ENCODE measurements at regions of chr19 and their contacts with region 1.

Region 1: GRCh38 chr19:48469289-48469881 is at the start of gene CYTH2:
- DNase-seq: peak; percentile 50 to 91
- H3K4me3 ChIP-seq: peak within 1 kb of the TSS; percentile 62 to 84 (median 80)
- H3K27ac ChIP-seq: peak within 1 kb of the TSS; percentile 90
- H3K4me1 ChIP-seq: peaks cover 0 to 9% (median 1%) of the 10 kb centered on the region in 4 experiments; a peak in 3 of 7 replicates
- H3K27me3 ChIP-seq: no peaks in the 10 kb centered on the region
- CTCF ChIP-seq: no peak
- EP300 ChIP-seq: peak in 1 of 2 experiments; percentile 80; a peak in 2 of 3 replicates
- POLR2A ChIP-seq: peak; percentile 90 to 97
- RAD21 ChIP-seq: no peak
- total RNA-seq, gene CYTH2: 67.7 and 71.4 TPM in 2 replicates

Region 2: GRCh38 chr19:48452289-48453190 is 16.8 kb before region 1 on chr19:
- CTCF ChIA-PET with region 1: interaction called, 3 read pairs
- POLR2A ChIA-PET with region 1: interaction called, 17 read pairs
- DNase-seq: no peak
- H3K4me3 ChIP-seq: no peak overlapping the region
- H3K27ac ChIP-seq: no peak overlapping the region
- H3K4me1 ChIP-seq: no peaks in the 10 kb centered on the region
- H3K27me3 ChIP-seq: no peaks in the 10 kb centered on the region
- CTCF ChIP-seq: no peak
- EP300 ChIP-seq: no peak
- POLR2A ChIP-seq: no peak
- RAD21 ChIP-seq: no peak

Region 3: GRCh38 chr19:48480558-48481500 is 11.4 kb after region 1 on chr19:
- CTCF ChIA-PET with region 1: interaction called, 3 read pairs
- POLR2A ChIA-PET with region 1: interaction called, 176 read pairs
- DNase-seq: no peak
- H3K4me3 ChIP-seq: peak overlapping the region in 1 of 4 experiments; percentile 29; a peak in 1 of 8 replicates
- H3K27ac ChIP-seq: no peak overlapping the region
- H3K4me1 ChIP-seq: peaks cover 0 to 1% (median 0%) of the 10 kb centered on the region in 4 experiments; a peak in 1 of 7 replicates
- H3K27me3 ChIP-seq: no peaks in the 10 kb centered on the region; a peak in 1 of 7 replicates
- CTCF ChIP-seq: no peak
- EP300 ChIP-seq: no peak
- POLR2A ChIP-seq: no peak; a peak in 1 of 3 replicates
- RAD21 ChIP-seq: no peak

Region 4: GRCh38 chr19:48487996-48488395 is 18.6 kb after region 1 on chr19:
- CTCF ChIA-PET with region 1: interaction called, 8 read pairs
- POLR2A ChIA-PET with region 1: interaction called, 176 read pairs
- DNase-seq: no peak
- H3K4me3 ChIP-seq: no peak overlapping the region
- H3K27ac ChIP-seq: no peak overlapping the region
- H3K4me1 ChIP-seq: peaks cover 0 to 17% (median 13%) of the 10 kb centered on the region in 4 experiments; a peak in 6 of 7 replicates
- H3K27me3 ChIP-seq: peaks cover 0 to 5% (median 3%) of the 10 kb centered on the region in 4 experiments; a peak in 3 of 7 replicates
- CTCF ChIP-seq: no peak
- EP300 ChIP-seq: no peak
- POLR2A ChIP-seq: no peak; a peak in 1 of 3 replicates
- RAD21 ChIP-seq: no peak

Region 5: GRCh38 chr19:48530066-48530720 is 60.8 kb after region 1 on chr19:
- CTCF ChIA-PET with region 1: no interaction called
- POLR2A ChIA-PET with region 1: no interaction called
- DNase-seq: no peak
- H3K4me3 ChIP-seq: no peak overlapping the region
- H3K27ac ChIP-seq: no peak overlapping the region
- H3K4me1 ChIP-seq: 0 out of 7 replicates have a peak, but pooled peaks cover 0 to 2% (median 0%) of the 10 kb centered on the region in 4 experiments
- H3K27me3 ChIP-seq: no peaks in the 10 kb centered on the region
- CTCF ChIP-seq: no peak
- EP300 ChIP-seq: no peak
- POLR2A ChIP-seq: no peak
- RAD21 ChIP-seq: no peak